AG04450 (cell line): ENCODE measurements at regions of chr2 and their contacts with region 1.

Region 1: GRCh38 chr2:72973566-72974435 is 56.5 kb downstream of the EMX1 start:
- DNase-seq: peak; percentile 24
- H3K4me3 ChIP-seq: no peak overlapping the region
- H3K27ac ChIP-seq: no peak overlapping the region
- H3K27me3 ChIP-seq: no peaks in the 10 kb centered on the region
- CTCF ChIP-seq: peak; percentile 95

Region 2: DNA sequence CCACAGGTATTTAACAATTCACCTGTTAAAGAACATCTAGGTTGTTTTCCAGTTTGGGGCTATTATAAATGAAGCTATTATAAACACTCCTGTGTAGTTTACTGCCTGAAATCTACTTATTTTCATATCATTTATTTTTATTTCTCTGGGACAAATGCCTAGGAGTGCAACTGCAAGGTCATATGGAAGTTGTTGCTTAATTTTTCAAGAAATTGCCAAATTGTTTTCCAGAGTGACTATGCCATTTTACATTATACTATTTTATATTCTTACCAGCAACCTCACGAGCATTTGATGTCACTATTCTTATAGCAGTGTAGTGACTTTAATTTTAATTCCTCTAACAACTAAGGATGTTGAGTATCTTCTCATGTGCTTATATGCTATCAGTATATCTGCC is 446.4 kb before region 1 on chr2:
- CTCF ChIA-PET with region 1: no interaction called
- POLR2A ChIA-PET with region 1: no interaction called
- DNase-seq: no peak
- H3K4me3 ChIP-seq: no peak overlapping the region
- H3K27ac ChIP-seq: no peak overlapping the region
- H3K27me3 ChIP-seq: no peaks in the 10 kb centered on the region
- CTCF ChIP-seq: no peak

Region 3: GRCh38 chr2:72871880-72872279 is 101.9 kb before region 1 on chr2:
- CTCF ChIA-PET with region 1: no interaction called
- POLR2A ChIA-PET with region 1: no interaction called
- DNase-seq: no peak
- H3K4me3 ChIP-seq: no peak overlapping the region
- H3K27ac ChIP-seq: no peak overlapping the region
- H3K27me3 ChIP-seq: no peaks in the 10 kb centered on the region
- CTCF ChIP-seq: no peak

Region 4: GRCh38 chr2:72924353-72925240 is 49.2 kb before region 1 on chr2:
- CTCF ChIA-PET with region 1: interaction called, 12 read pairs
- POLR2A ChIA-PET with region 1: no interaction called
- DNase-seq: no peak
- H3K4me3 ChIP-seq: no peak overlapping the region
- H3K27ac ChIP-seq: no peak overlapping the region
- H3K27me3 ChIP-seq: peaks cover 100% of the 10 kb centered on the region
- CTCF ChIP-seq: no peak

Region 5: GRCh38 chr2:73112913-73113633 is 139.3 kb after region 1 on chr2 and contains the start of gene RAB11FIP5:
- CTCF ChIA-PET with region 1: no interaction called
- POLR2A ChIA-PET with region 1: no interaction called
- DNase-seq: peak; percentile 55
- H3K4me3 ChIP-seq: peak within 1 kb of the TSS; percentile 84
- H3K27ac ChIP-seq: peak within 1 kb of the TSS; percentile 99
- H3K27me3 ChIP-seq: no peaks in the 10 kb centered on the region
- CTCF ChIP-seq: no peak
- polyA plus RNA-seq, gene RAB11FIP5: 29.6 and 37.5 TPM in 2 replicates

Region 6: GRCh38 chr2:73218298-73218697 is 244.5 kb after region 1 on chr2:
- CTCF ChIA-PET with region 1: no interaction called
- POLR2A ChIA-PET with region 1: no interaction called
- DNase-seq: no peak
- H3K4me3 ChIP-seq: no peak overlapping the region
- H3K27ac ChIP-seq: peak overlapping the region; percentile 39
- H3K27me3 ChIP-seq: no peaks in the 10 kb centered on the region
- CTCF ChIP-seq: no peak